HCT116 (cell line): ENCODE measurements at regions of chr12 and their contacts with region 1.

Region 1: GRCh38 chr12:131132118-131132892 is 178.6 kb downstream of the ADGRD1 start:
- DNase-seq: peak; percentile 47
- ATAC-seq: peak; percentile 88
- H3K4me3 ChIP-seq: peak overlapping the region in 1 of 2 experiments; percentile 22; a peak in 2 of 4 replicates
- H3K27ac ChIP-seq: no peak overlapping the region
- H3K4me1 ChIP-seq: peaks cover 4 to 19% of the 10 kb centered on the region in 2 experiments; a peak in 3 of 4 replicates
- H3K27me3 ChIP-seq: no peaks in the 10 kb centered on the region
- CTCF ChIP-seq: peak; percentile 75 to 90 (median 81)
- POLR2A ChIP-seq: no peak
- RAD21 ChIP-seq: peak; percentile 74

Region 2: GRCh38 chr12:130147875-130148596 is 984.3 kb before region 1 on chr12:
- CTCF ChIA-PET with region 1: no interaction called
- POLR2A ChIA-PET with region 1: no interaction called
- RAD21 ChIA-PET with region 1: no interaction called
- intact Hi-C with region 1: no loop called
- DNase-seq: no peak
- ATAC-seq: no peak
- H3K4me3 ChIP-seq: no peak overlapping the region
- H3K27ac ChIP-seq: no peak overlapping the region
- H3K4me1 ChIP-seq: no peaks in the 10 kb centered on the region
- H3K27me3 ChIP-seq: no peaks in the 10 kb centered on the region
- CTCF ChIP-seq: no peak
- POLR2A ChIP-seq: no peak
- RAD21 ChIP-seq: no peak

Region 3: DNA sequence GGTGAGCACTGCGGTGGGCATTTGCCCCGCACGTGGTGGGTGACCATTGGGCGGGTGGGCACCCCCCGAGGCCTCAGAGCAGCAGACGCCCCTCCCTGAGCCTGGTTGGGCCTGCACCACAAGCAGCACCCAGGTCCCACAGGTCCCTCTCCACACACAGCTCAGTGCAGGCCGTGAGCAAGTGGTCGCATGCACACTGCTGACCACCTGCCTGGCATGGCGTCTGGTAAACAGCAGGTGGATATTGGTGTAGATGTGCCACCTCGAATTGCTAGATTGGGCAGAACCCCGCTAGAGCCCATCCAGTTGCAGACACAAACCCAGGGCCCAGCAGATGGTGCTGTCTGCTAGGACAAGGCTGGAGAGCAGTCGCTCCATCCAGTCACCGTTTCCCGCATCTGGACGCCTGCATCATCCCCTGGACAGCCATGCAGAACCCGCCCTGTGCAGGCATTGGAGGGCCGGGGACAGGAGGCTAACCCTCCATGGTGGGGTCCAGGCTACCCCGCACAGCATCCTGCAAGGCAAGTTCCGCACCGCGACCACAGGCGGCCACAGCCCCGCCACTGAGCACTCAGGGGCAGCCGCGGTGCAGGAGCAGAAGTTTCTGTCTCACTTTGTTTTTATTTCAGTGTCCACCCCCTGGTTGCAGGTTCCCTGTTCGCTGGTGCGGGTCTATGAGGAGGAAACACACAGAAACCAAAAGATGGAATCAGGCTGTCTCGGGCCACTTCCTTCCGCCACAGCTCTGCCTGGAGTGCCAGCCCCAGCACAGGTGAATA is 370.6 kb before region 1 on chr12:
- CTCF ChIA-PET with region 1: interaction called, 3 read pairs
- POLR2A ChIA-PET with region 1: no interaction called
- RAD21 ChIA-PET with region 1: no interaction called
- intact Hi-C with region 1: loop called (anchors 5 kb)
- DNase-seq: peak; percentile 29
- ATAC-seq: peak; percentile 72
- H3K4me3 ChIP-seq: no peak overlapping the region
- H3K27ac ChIP-seq: no peak overlapping the region
- H3K4me1 ChIP-seq: no peaks in the 10 kb centered on the region
- H3K27me3 ChIP-seq: no peaks in the 10 kb centered on the region
- CTCF ChIP-seq: peak; percentile 49 to 55 (median 52); a peak in 5 of 6 replicates
- POLR2A ChIP-seq: no peak
- RAD21 ChIP-seq: peak; percentile 86

Region 4: GRCh38 chr12:130916251-130916911 is 215.9 kb before region 1 on chr12:
- CTCF ChIA-PET with region 1: interaction called, 10 read pairs
- POLR2A ChIA-PET with region 1: no interaction called
- RAD21 ChIA-PET with region 1: interaction called in 1 of 2 experiments, 5 read pairs
- intact Hi-C with region 1: loop called (anchors 1 kb)
- DNase-seq: peak; percentile 38
- ATAC-seq: peak; percentile 94
- H3K4me3 ChIP-seq: peak overlapping the region in 1 of 2 experiments; percentile 11; a peak in 2 of 4 replicates
- H3K27ac ChIP-seq: no peak overlapping the region
- H3K4me1 ChIP-seq: peaks cover 2 to 6% of the 10 kb centered on the region in 2 experiments; a peak in 1 of 4 replicates
- H3K27me3 ChIP-seq: peaks cover 10% of the 10 kb centered on the region; the same call in 1 of the 2 replicates
- CTCF ChIP-seq: peak; percentile 78 to 92 (median 87)
- POLR2A ChIP-seq: no peak
- RAD21 ChIP-seq: peak; percentile 97

Region 5: GRCh38 chr12:131104463-131105350 is 27.6 kb before region 1 on chr12:
- CTCF ChIA-PET with region 1: interaction called, 27 read pairs
- POLR2A ChIA-PET with region 1: interaction called, 3 read pairs
- RAD21 ChIA-PET with region 1: interaction called, 5 to 6 read pairs
- intact Hi-C with region 1: loop called (anchors 1 kb)
- DNase-seq: peak; percentile 64
- ATAC-seq: peak; percentile 99
- H3K4me3 ChIP-seq: no peak overlapping the region
- H3K27ac ChIP-seq: no peak overlapping the region
- H3K4me1 ChIP-seq: 0 out of 4 replicates have a peak, but pooled peaks cover 0 to 5% of the 10 kb centered on the region in 2 experiments
- H3K27me3 ChIP-seq: no peaks in the 10 kb centered on the region; the same call in 1 of the 2 replicates
- CTCF ChIP-seq: peak; percentile 89 to 96 (median 95)
- POLR2A ChIP-seq: no peak
- RAD21 ChIP-seq: peak; percentile 95

Region 6: DNA sequence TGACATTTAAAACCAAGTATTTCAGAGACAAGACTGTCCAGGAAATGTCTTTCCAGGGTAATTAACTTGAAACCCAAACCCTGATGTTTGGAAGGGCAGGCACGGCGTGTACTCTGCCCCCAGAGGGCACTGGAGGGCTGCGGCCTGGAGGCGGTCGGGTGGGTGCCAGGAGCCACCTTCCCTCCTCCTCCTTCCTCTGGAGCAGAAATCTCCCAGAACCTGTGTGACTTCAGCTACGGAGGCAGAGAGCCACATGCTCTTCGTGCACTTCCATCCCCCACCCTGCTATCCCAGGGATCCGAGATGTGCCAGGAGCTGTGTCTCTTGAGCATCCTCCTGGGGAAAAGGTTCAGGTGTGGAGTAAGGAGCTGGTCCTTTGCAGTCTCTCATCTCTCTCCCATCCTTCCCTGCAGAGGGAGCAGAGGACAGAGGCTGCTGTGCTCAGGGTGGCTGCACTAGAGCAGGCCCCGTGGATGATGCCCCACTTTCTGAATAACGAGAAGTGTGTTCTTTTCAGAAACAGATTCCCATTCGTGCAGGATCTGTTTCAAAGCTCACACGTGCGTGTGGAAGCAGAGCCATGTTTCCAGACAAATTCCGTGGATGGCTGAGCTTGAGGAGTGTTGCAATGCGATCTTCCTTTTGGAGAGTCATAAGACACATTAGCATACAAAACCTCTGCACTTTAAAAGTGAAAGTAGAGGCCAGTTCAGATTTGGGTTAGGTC is 15.8 kb before region 1 on chr12:
- CTCF ChIA-PET with region 1: interaction called, 14 read pairs
- POLR2A ChIA-PET with region 1: no interaction called
- RAD21 ChIA-PET with region 1: interaction called in 1 of 2 experiments, 3 read pairs
- intact Hi-C with region 1: no loop called
- DNase-seq: no peak
- ATAC-seq: peak; percentile 84
- H3K4me3 ChIP-seq: no peak overlapping the region
- H3K27ac ChIP-seq: no peak overlapping the region
- H3K4me1 ChIP-seq: peaks cover 0 to 11% of the 10 kb centered on the region in 2 experiments; a peak in 2 of 4 replicates
- H3K27me3 ChIP-seq: no peaks in the 10 kb centered on the region
- CTCF ChIP-seq: peak; percentile 62 to 74 (median 71)
- POLR2A ChIP-seq: no peak
- RAD21 ChIP-seq: peak; percentile 78

Region 7: GRCh38 chr12:131159660-131160059 is 27.4 kb after region 1 on chr12:
- CTCF ChIA-PET with region 1: interaction called, 11 read pairs
- POLR2A ChIA-PET with region 1: no interaction called
- RAD21 ChIA-PET with region 1: no interaction called
- intact Hi-C with region 1: no loop called
- DNase-seq: peak; percentile 18
- ATAC-seq: peak; percentile 86
- H3K4me3 ChIP-seq: no peak overlapping the region
- H3K27ac ChIP-seq: no peak overlapping the region
- H3K4me1 ChIP-seq: no peaks in the 10 kb centered on the region
- H3K27me3 ChIP-seq: peaks cover 7% of the 10 kb centered on the region; the same call in 1 of the 2 replicates
- CTCF ChIP-seq: peak; percentile 34 to 55 (median 37); a peak in 4 of 6 replicates
- POLR2A ChIP-seq: no peak
- RAD21 ChIP-seq: peak; percentile 67

Region 8: GRCh38 chr12:131773582-131774221 is 641.4 kb after region 1 on chr12:
- CTCF ChIA-PET with region 1: no interaction called
- POLR2A ChIA-PET with region 1: no interaction called
- RAD21 ChIA-PET with region 1: no interaction called
- intact Hi-C with region 1: no loop called
- DNase-seq: no peak
- ATAC-seq: no peak
- H3K4me3 ChIP-seq: no peak overlapping the region
- H3K27ac ChIP-seq: no peak overlapping the region
- H3K4me1 ChIP-seq: no peaks in the 10 kb centered on the region
- H3K27me3 ChIP-seq: no peaks in the 10 kb centered on the region
- CTCF ChIP-seq: no peak
- POLR2A ChIP-seq: no peak
- RAD21 ChIP-seq: no peak